Heart left ventricle (tissue), 16 donors: ENCODE measurements at regions of chr9 and their contacts with region 1.

Region 1: GRCh38 chr9:119792242-119792641 is 423.0 kb upstream of the BRINP1 start:
- DNase-seq: no peak
- ATAC-seq: no peak
- H3K4me3 ChIP-seq: no peak overlapping the region
- H3K27ac ChIP-seq: no peak overlapping the region
- H3K4me1 ChIP-seq: peaks cover 0 to 7% (median 0%) of the 10 kb centered on the region in 12 donors
- H3K27me3 ChIP-seq: peaks cover 0 to 4% (median 0%) of the 10 kb centered on the region in 9 donors
- CTCF ChIP-seq: no peak
- POLR2A ChIP-seq: no peak

Region 2: GRCh38 chr9:119761737-119762288 is 30.4 kb before region 1 on chr9:
- intact Hi-C with region 1: loop called in 1 of 10 experiments (anchors 2 kb)
- DNase-seq: no peak
- ATAC-seq: no peak
- H3K4me3 ChIP-seq: no peak overlapping the region
- H3K27ac ChIP-seq: no peak overlapping the region
- H3K4me1 ChIP-seq: no peaks in the 10 kb centered on the region
- H3K27me3 ChIP-seq: peaks cover 0 to 3% (median 0%) of the 10 kb centered on the region in 9 donors
- CTCF ChIP-seq: no peak
- POLR2A ChIP-seq: no peak